ENCODE measurements at regions of chr15 and their contacts with region 1.

Region 1: GRCh38 chr15:79380755-79381497 is 51.2 kb upstream of the MINAR1 start:
- DNase-seq: peak; percentile 37 to 52 (median 48)
- H3K4me3 ChIP-seq: no peak overlapping the region
- H3K4me3 Mint-ChIP-seq: no peak overlapping the region
- H3K27ac ChIP-seq: no peak overlapping the region
- H3K27ac Mint-ChIP-seq: no peak overlapping the region
- H3K4me1 ChIP-seq: peaks cover 0 to 3% of the 10 kb centered on the region in 2 donors
- H3K4me1 Mint-ChIP-seq: peaks cover 10% of the 10 kb centered on the region
- H3K27me3 ChIP-seq: no peaks in the 10 kb centered on the region
- H3K27me3 Mint-ChIP-seq: no peaks in the 10 kb centered on the region
- CTCF ChIP-seq: peak; percentile 87

Region 2: GRCh38 chr15:79455361-79455760 is 74.4 kb after region 1 on chr15:
- intact Hi-C with region 1: no loop called
- DNase-seq: no peak
- H3K4me3 ChIP-seq: no peak overlapping the region
- H3K4me3 Mint-ChIP-seq: no peak overlapping the region
- H3K27ac ChIP-seq: no peak overlapping the region
- H3K27ac Mint-ChIP-seq: no peak overlapping the region
- H3K4me1 ChIP-seq: no peaks in the 10 kb centered on the region
- H3K4me1 Mint-ChIP-seq: no peaks in the 10 kb centered on the region
- H3K27me3 ChIP-seq: no peaks in the 10 kb centered on the region
- H3K27me3 Mint-ChIP-seq: peaks cover 0 to 8% (median 4%) of the 10 kb centered on the region in 3 donors
- CTCF ChIP-seq: no peak

Region 3: GRCh38 chr15:79853458-79854328 is 472.8 kb after region 1 on chr15:
- intact Hi-C with region 1: loop called in 1 of 2 experiments (anchors 5 kb)
- DNase-seq: peak; percentile 32 to 56 (median 55)
- H3K4me3 ChIP-seq: no peak overlapping the region
- H3K4me3 Mint-ChIP-seq: no peak overlapping the region
- H3K27ac ChIP-seq: no peak overlapping the region
- H3K27ac Mint-ChIP-seq: no peak overlapping the region
- H3K4me1 ChIP-seq: no peaks in the 10 kb centered on the region
- H3K4me1 Mint-ChIP-seq: peaks cover 9% of the 10 kb centered on the region
- H3K27me3 ChIP-seq: no peaks in the 10 kb centered on the region
- H3K27me3 Mint-ChIP-seq: no peaks in the 10 kb centered on the region
- CTCF ChIP-seq: peak; percentile 91

Region 4: GRCh38 chr15:80234883-80235282 is 854.0 kb after region 1 on chr15:
- intact Hi-C with region 1: loop called in 1 of 2 experiments (anchors 5 kb)
- DNase-seq: peak; percentile 3 to 18 (median 6)
- H3K4me3 ChIP-seq: no peak overlapping the region
- H3K4me3 Mint-ChIP-seq: no peak overlapping the region
- H3K27ac ChIP-seq: no peak overlapping the region
- H3K27ac Mint-ChIP-seq: no peak overlapping the region
- H3K4me1 ChIP-seq: no peaks in the 10 kb centered on the region
- H3K4me1 Mint-ChIP-seq: no peaks in the 10 kb centered on the region
- H3K27me3 ChIP-seq: no peaks in the 10 kb centered on the region
- H3K27me3 Mint-ChIP-seq: peaks cover 8 to 19% (median 9%) of the 10 kb centered on the region in 3 donors
- CTCF ChIP-seq: peak; percentile 67

Measured in CD14-positive monocyte (primary cell).